A673 (cell line): ENCODE measurements at regions of chr16 and their contacts with region 1.

Region 1: GRCh38 chr16:23952128-23952970 is 116.6 kb downstream of the PRKCB start:
- DNase-seq: peak; percentile 92
- H3K4me3 ChIP-seq: peak overlapping the region; percentile 19
- H3K27ac ChIP-seq: peak overlapping the region; percentile 94
- H3K4me1 ChIP-seq: peaks cover 61% of the 10 kb centered on the region
- H3K27me3 ChIP-seq: no peaks in the 10 kb centered on the region
- CTCF ChIP-seq: no peak

Region 2: GRCh38 chr16:23754594-23755483 is 197.5 kb before region 1 on chr16 and contains the start of gene CHP2:
- CTCF ChIA-PET with region 1: no interaction called
- POLR2A ChIA-PET with region 1: no interaction called
- intact Hi-C with region 1: no loop called
- DNase-seq: peak; percentile 18
- H3K4me3 ChIP-seq: peak within 1 kb of the TSS; percentile 40
- H3K27ac ChIP-seq: no peak within 1 kb of the TSS
- H3K4me1 ChIP-seq: no peaks in the 10 kb centered on the region
- H3K27me3 ChIP-seq: no peaks in the 10 kb centered on the region
- CTCF ChIP-seq: no peak
- total RNA-seq, gene CHP2: 0.99 and 1.0 TPM in 2 replicates

Region 3: GRCh38 chr16:23966597-23967394 is 14.4 kb after region 1 on chr16:
- CTCF ChIA-PET with region 1: interaction called, 5 read pairs
- POLR2A ChIA-PET with region 1: interaction called, 3 read pairs
- intact Hi-C with region 1: loop called (anchors 2 kb)
- DNase-seq: peak; percentile 86
- H3K4me3 ChIP-seq: no peak overlapping the region
- H3K27ac ChIP-seq: peak overlapping the region; percentile 77
- H3K4me1 ChIP-seq: peaks cover 33% of the 10 kb centered on the region
- H3K27me3 ChIP-seq: no peaks in the 10 kb centered on the region
- CTCF ChIP-seq: 0 out of 2 replicates have a peak, but pooled peaks have one; percentile 19

Region 4: DNA sequence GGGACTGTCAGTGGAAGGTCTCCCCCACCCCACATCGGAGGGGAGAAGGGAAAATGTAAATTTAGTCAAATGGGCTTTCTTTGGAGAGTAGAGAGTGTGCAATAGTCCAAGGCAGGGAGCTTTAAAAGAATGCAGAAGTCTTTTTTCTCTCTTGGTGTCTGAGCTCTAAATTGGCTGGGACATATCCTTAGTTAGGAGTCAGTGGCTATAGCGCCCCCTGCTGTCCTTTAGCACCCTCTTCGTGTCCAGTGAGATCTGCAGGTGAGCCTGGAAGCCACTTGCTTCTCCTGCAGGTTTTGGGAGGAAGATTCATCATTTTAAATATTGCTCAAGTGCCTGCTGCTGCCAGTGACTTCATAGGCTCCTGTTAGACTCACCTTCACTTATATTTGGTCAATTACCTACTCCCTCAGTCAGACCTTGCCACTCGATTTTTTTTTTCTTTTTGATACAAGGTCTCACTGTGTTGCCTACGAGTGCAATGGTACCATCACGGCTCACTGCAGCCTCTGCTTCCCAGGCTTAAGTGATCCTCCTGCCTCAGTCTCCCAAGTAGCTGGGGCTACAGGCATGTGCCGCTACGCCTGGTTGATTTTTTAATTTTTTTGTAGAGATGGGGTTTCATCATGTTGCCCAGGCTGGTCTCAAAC is 58.2 kb after region 1 on chr16:
- CTCF ChIA-PET with region 1: interaction called, 7 read pairs
- POLR2A ChIA-PET with region 1: no interaction called
- intact Hi-C with region 1: loop called (anchors 5 kb)
- DNase-seq: peak; percentile 90
- H3K4me3 ChIP-seq: no peak overlapping the region
- H3K27ac ChIP-seq: peak overlapping the region; percentile 50
- H3K4me1 ChIP-seq: peaks cover 59% of the 10 kb centered on the region
- H3K27me3 ChIP-seq: no peaks in the 10 kb centered on the region
- CTCF ChIP-seq: peak; percentile 90